ENCODE measurements at regions of chr13 and their contacts with region 1.

Region 1: DNA sequence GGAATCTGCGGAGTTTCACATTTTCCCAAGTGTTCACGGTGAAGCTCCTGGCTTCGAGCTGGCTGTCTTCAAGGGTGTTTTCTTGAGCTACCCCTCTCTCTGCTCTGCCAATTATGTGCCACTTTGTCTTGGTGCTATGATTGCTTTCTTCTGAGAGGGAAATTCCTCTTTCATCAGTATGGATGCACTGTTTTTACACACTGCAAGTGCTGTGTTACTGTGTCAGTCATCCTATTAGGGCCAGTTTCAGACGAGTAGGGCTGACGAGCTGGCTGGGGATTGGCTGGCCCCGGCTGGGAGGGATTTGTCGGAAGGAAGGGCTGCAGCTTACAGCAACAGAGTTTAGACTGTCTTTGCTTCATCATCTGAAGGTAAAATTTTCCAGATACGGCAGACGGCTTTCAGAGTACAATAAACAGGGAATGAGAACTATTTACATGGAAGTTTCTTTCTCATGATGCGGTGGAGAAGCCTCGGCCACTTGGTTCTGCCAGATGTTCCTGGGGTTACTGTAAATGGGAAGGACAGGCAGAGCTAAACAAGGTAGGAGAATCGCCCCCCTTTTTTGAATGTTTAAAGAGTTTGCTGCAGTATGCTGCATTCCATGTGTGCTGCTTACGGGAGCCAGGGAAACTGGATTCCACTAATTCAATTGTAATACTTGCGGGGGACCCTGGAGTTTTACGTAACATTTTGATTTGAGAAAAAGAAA is at the start of gene MBNL2:
- DNase-seq: peak; percentile 82 to 95 (median 84)
- H3K4me3 ChIP-seq: peak within 1 kb of the TSS; percentile 49 to 76
- H3K4me3 Mint-ChIP-seq: peak within 1 kb of the TSS; percentile 91 to 96 (median 94)
- H3K27ac ChIP-seq: peak within 1 kb of the TSS; percentile 90
- H3K27ac Mint-ChIP-seq: peak within 1 kb of the TSS; percentile 96 to 99 (median 98)
- H3K4me1 ChIP-seq: peaks cover 42% of the 10 kb centered on the region
- H3K4me1 Mint-ChIP-seq: peaks cover 25 to 52% (median 34%) of the 10 kb centered on the region in 4 donors
- H3K27me3 ChIP-seq: no peaks in the 10 kb centered on the region
- H3K27me3 Mint-ChIP-seq: no peaks in the 10 kb centered on the region
- total RNA-seq, gene MBNL2: 33.0 to 36.2 TPM

Region 2: GRCh38 chr13:97238432-97238831 is 16.3 kb after region 1 on chr13:
- CTCF ChIA-PET with region 1: interaction called, 15 read pairs
- POLR2A ChIA-PET with region 1: interaction called, 8 read pairs
- intact Hi-C with region 1: loop called (anchors 2 kb)
- DNase-seq: peak in 1 of 5 donors; percentile 53
- H3K4me3 ChIP-seq: no peak overlapping the region
- H3K4me3 Mint-ChIP-seq: peak overlapping the region; percentile 22 to 75 (median 50)
- H3K27ac ChIP-seq: no peak overlapping the region
- H3K27ac Mint-ChIP-seq: peak overlapping the region; percentile 17 to 74 (median 54)
- H3K4me1 ChIP-seq: peaks cover 50% of the 10 kb centered on the region
- H3K4me1 Mint-ChIP-seq: peaks cover 54 to 98% (median 72%) of the 10 kb centered on the region in 4 donors
- H3K27me3 ChIP-seq: no peaks in the 10 kb centered on the region
- H3K27me3 Mint-ChIP-seq: no peaks in the 10 kb centered on the region

Region 3: GRCh38 chr13:97344265-97345175 is 122.4 kb after region 1 on chr13:
- CTCF ChIA-PET with region 1: interaction called, 4 read pairs
- POLR2A ChIA-PET with region 1: no interaction called
- intact Hi-C with region 1: loop called (anchors 5 kb)
- DNase-seq: peak in 4 of 5 donors; percentile 38 to 46 (median 44)
- H3K4me3 ChIP-seq: no peak overlapping the region
- H3K4me3 Mint-ChIP-seq: no peak overlapping the region
- H3K27ac ChIP-seq: no peak overlapping the region
- H3K27ac Mint-ChIP-seq: no peak overlapping the region
- H3K4me1 ChIP-seq: peaks cover 10% of the 10 kb centered on the region
- H3K4me1 Mint-ChIP-seq: peaks cover 6 to 8% (median 7%) of the 10 kb centered on the region in 4 donors
- H3K27me3 ChIP-seq: no peaks in the 10 kb centered on the region
- H3K27me3 Mint-ChIP-seq: no peaks in the 10 kb centered on the region

Region 4: GRCh38 chr13:97975848-97976609 is 753.9 kb after region 1 on chr13:
- CTCF ChIA-PET with region 1: no interaction called
- POLR2A ChIA-PET with region 1: interaction called, 3 read pairs
- intact Hi-C with region 1: loop called (anchors 5 kb)
- DNase-seq: peak; percentile 85 to 90 (median 88)
- H3K4me3 ChIP-seq: peak overlapping the region; percentile 38 to 75
- H3K4me3 Mint-ChIP-seq: peak overlapping the region; percentile 90 to 97 (median 94)
- H3K27ac ChIP-seq: peak overlapping the region; percentile 77
- H3K27ac Mint-ChIP-seq: peak overlapping the region; percentile 88 to 96 (median 93)
- H3K4me1 ChIP-seq: peaks cover 26% of the 10 kb centered on the region
- H3K4me1 Mint-ChIP-seq: peaks cover 20 to 37% (median 29%) of the 10 kb centered on the region in 4 donors
- H3K27me3 ChIP-seq: no peaks in the 10 kb centered on the region
- H3K27me3 Mint-ChIP-seq: no peaks in the 10 kb centered on the region